PC-3 (cell line): ENCODE measurements at regions of chr19 and their contacts with region 1.

Region 1: DNA sequence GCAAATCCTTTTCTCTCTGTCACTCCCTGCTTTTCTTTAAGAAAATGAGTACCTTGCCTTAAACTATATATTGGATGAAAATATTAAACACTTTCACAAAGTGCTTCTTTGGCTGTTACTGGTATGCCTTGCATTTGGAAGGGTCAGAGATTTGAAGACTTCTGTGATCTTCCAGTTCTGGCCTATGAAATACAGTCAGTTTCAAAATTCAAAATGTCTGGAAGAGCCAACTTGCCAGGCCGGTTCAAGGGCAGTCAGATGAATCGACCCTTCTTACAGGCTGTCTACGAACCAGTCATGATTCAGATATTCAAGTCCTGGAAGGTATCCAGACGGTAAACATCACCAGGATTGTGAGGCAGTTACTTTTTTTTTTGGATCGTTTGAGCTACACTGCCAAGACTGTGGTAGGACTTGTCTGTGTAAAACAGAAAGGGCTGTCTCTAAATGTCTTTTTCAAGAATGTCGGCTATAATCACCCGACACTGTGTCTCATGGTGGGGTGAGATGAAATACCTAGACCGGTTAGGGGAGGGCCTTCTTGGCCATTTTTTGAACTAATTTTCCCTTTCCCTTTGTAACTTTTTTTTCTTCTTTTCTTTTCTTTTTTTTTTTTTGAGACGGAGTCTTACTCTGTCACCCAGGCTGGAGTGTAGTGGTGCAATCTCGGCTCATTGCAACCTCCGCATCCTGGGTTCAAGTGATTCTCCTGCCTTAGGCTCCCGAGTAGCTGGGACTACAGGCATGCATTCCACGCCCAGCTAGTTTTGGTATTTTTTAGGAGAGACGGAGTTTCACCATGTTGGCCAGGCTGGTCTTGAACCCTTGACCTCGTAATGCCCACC is 11.2 kb downstream of the ACTN4 start:
- DNase-seq: peak; percentile 97
- ATAC-seq: peak; percentile 60
- H3K4me3 ChIP-seq: peak overlapping the region; percentile 53
- H3K27ac ChIP-seq: peak overlapping the region; percentile 99
- H3K4me1 ChIP-seq: peaks cover 93% of the 10 kb centered on the region
- H3K27me3 ChIP-seq: no peaks in the 10 kb centered on the region
- CTCF ChIP-seq: no peak

Region 2: GRCh38 chr19:38634757-38635482 is 23.8 kb before region 1 on chr19:
- CTCF ChIA-PET with region 1: no interaction called
- POLR2A ChIA-PET with region 1: no interaction called
- intact Hi-C with region 1: no loop called
- DNase-seq: peak; percentile 73
- ATAC-seq: peak; percentile 27; the same call in 1 of the 2 replicates
- H3K4me3 ChIP-seq: no peak overlapping the region
- H3K27ac ChIP-seq: no peak overlapping the region
- H3K4me1 ChIP-seq: peaks cover 25% of the 10 kb centered on the region
- H3K27me3 ChIP-seq: no peaks in the 10 kb centered on the region
- CTCF ChIP-seq: peak; percentile 78

Region 3: GRCh38 chr19:38707512-38708114 is 48.9 kb after region 1 on chr19:
- CTCF ChIA-PET with region 1: no interaction called
- POLR2A ChIA-PET with region 1: no interaction called
- intact Hi-C with region 1: loop called (anchors 10 kb)
- DNase-seq: peak; percentile 75
- ATAC-seq: peak; percentile 86
- H3K4me3 ChIP-seq: no peak overlapping the region
- H3K27ac ChIP-seq: peak overlapping the region; percentile 81
- H3K4me1 ChIP-seq: peaks cover 22% of the 10 kb centered on the region
- H3K27me3 ChIP-seq: no peaks in the 10 kb centered on the region
- CTCF ChIP-seq: no peak